PC-9 (cell line): ENCODE measurements at regions of chr6 and their contacts with region 1.

Region 1: GRCh38 chr6:53064726-53065215 is 433 bp upstream of the FBXO9 start:
- DNase-seq: peak; percentile 92 to 93
- H3K4me3 ChIP-seq: peak overlapping the region; percentile 78
- H3K27ac ChIP-seq: 0 out of 2 replicates have a peak overlapping the region, but pooled peaks have one; percentile 7
- H3K4me1 ChIP-seq: peaks cover 46% of the 10 kb centered on the region
- H3K27me3 ChIP-seq: no peaks in the 10 kb centered on the region
- CTCF ChIP-seq: no peak

Region 2: GRCh38 chr6:52670502-52671409 is 394.0 kb before region 1 on chr6 and contains the start of gene TMEM14A:
- CTCF ChIA-PET with region 1: no interaction called
- POLR2A ChIA-PET with region 1: interaction called, 3 read pairs
- intact Hi-C with region 1: loop called (anchors 2 kb)
- DNase-seq: peak; percentile 85 to 96
- H3K4me3 ChIP-seq: peak within 1 kb of the TSS; percentile 69
- H3K27ac ChIP-seq: no peak within 1 kb of the TSS
- H3K4me1 ChIP-seq: peaks cover 22% of the 10 kb centered on the region
- H3K27me3 ChIP-seq: no peaks in the 10 kb centered on the region
- CTCF ChIP-seq: no peak
- total RNA-seq, gene TMEM14A: 48.9 and 75.2 TPM in 2 replicates

Region 3: DNA sequence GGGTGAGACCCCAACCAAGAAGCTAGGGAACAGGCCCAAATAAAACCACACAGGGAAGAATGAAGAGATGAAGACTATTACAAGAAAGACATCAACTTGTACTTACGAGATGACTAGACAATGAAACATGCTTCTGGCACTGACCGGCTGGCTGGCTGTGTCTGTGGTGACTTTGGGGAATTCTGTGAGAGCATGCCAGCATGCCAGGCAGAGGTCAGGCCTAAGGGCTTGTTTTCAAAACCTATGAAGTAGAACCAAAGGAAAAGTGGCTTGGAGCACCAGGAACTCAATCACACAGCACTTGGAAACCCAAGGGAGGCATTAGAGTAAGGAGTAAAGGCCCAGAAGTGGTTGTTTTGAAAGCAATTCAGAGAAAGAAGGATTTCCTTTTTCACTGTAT is 126.9 kb before region 1 on chr6:
- CTCF ChIA-PET with region 1: no interaction called
- POLR2A ChIA-PET with region 1: interaction called, 12 read pairs
- intact Hi-C with region 1: no loop called
- DNase-seq: no peak
- H3K4me3 ChIP-seq: no peak overlapping the region
- H3K27ac ChIP-seq: no peak overlapping the region
- H3K4me1 ChIP-seq: no peaks in the 10 kb centered on the region
- H3K27me3 ChIP-seq: no peaks in the 10 kb centered on the region
- CTCF ChIP-seq: no peak